ENCODE measurements at regions of chr3 and their contacts with region 1.

Region 1: DNA sequence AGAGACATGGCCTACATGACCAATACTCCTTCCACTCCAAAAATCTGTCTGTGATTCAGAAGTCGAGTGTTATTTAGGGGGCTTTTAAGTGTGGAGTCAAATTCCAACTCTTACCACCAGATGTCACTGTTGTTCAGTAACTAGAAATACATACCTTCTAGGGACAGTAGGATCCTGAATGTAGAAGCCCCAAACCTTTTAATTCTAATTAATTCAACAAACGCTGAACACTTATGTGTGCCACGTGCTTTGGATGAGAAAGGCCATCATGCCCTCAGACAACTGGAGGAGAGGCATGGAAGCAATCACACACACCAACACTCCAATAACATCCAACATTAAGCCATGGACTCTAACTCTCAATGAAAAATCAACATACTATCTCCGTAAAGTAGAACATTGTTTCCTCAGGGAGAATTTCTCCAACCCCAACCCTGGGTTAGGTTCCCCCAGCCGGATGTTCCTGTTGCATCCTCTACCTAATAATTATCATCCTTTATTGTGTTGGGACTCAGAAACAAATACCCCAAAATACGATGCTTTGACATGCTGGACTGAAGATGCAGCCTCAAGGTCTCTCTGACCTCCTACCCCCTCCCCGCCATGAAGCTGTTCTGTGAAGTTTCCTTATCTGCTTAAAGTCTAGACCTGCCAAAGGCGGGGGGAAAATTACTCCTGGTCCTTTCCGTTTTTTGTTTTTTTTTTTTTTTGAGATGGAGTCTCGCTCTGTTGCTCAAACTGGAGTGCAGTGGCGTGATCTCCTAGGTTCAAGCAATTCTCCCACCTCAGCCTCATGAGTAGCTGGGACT is 8.0 kb upstream of the CCDC13 start:
- DNase-seq: peak; percentile 61 to 81 (median 70)
- ATAC-seq: peak; percentile 95
- H3K4me3 ChIP-seq: no peak overlapping the region
- H3K27ac ChIP-seq: no peak overlapping the region
- H3K4me1 ChIP-seq: peaks cover 4 to 6% of the 10 kb centered on the region in 2 experiments; a peak in 2 of 5 replicates
- H3K27me3 ChIP-seq: no peaks in the 10 kb centered on the region
- CTCF ChIP-seq: peak; percentile 77 to 92 (median 77); a peak in 5 of 6 replicates
- EP300 ChIP-seq: no peak
- POLR2A ChIP-seq: no peak
- RAD21 ChIP-seq: peak; percentile 91 to 93

Region 2: GRCh38 chr3:42819351-42819965 is 38.4 kb after region 1 on chr3:
- CTCF ChIA-PET with region 1: interaction called, 5 read pairs
- POLR2A ChIA-PET with region 1: interaction called, 4 read pairs
- in situ Hi-C with region 1: no loop called
- intact Hi-C with region 1: loop called (anchors 2 kb)
- DNase-seq: peak in 2 of 4 experiments; percentile 43 to 54
- ATAC-seq: peak; percentile 81
- H3K4me3 ChIP-seq: no peak overlapping the region
- H3K27ac ChIP-seq: no peak overlapping the region
- H3K4me1 ChIP-seq: peaks cover 3 to 11% of the 10 kb centered on the region in 2 experiments; a peak in 3 of 5 replicates
- H3K27me3 ChIP-seq: 0 out of 5 replicates have a peak, but pooled peaks cover 0 to 4% of the 10 kb centered on the region in 2 experiments
- CTCF ChIP-seq: peak; percentile 41 to 45 (median 43); a peak in 4 of 6 replicates
- EP300 ChIP-seq: no peak
- POLR2A ChIP-seq: no peak
- RAD21 ChIP-seq: peak in 1 of 2 experiments; percentile 14; a peak in 1 of 4 replicates

Region 3: DNA sequence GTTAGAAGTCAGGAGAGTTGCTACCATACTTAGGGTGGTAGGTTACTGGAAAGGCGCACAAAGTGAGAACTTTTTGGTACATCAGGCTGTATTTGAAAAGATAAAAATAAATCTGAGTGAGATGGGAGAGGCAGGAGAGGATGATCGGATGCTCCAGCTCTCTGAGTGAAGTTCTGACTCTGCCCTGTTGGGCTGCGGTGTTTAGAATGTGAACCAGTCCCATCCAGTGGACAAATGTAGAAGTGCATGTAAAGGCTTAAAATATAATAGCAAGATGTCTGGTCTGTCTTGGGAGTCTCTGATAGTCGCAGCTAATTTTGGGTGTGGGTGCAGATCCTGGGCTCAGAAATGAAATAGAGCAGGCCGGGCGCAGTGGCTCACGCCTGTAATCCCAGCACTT is 58.5 kb after region 1 on chr3:
- CTCF ChIA-PET with region 1: interaction called, 16 read pairs
- POLR2A ChIA-PET with region 1: no interaction called
- in situ Hi-C with region 1: no loop called
- intact Hi-C with region 1: loop called (anchors 2 kb)
- DNase-seq: peak; percentile 69 to 86 (median 75)
- ATAC-seq: peak; percentile 92
- H3K4me3 ChIP-seq: no peak overlapping the region
- H3K27ac ChIP-seq: no peak overlapping the region
- H3K4me1 ChIP-seq: peaks cover 10 to 26% of the 10 kb centered on the region in 2 experiments
- H3K27me3 ChIP-seq: peaks cover 0 to under 1% of the 10 kb centered on the region in 2 experiments; a peak in 2 of 5 replicates
- CTCF ChIP-seq: peak; percentile 75 to 98 (median 94)
- EP300 ChIP-seq: no peak
- POLR2A ChIP-seq: no peak
- RAD21 ChIP-seq: peak; percentile 77 to 83

Region 4: DNA sequence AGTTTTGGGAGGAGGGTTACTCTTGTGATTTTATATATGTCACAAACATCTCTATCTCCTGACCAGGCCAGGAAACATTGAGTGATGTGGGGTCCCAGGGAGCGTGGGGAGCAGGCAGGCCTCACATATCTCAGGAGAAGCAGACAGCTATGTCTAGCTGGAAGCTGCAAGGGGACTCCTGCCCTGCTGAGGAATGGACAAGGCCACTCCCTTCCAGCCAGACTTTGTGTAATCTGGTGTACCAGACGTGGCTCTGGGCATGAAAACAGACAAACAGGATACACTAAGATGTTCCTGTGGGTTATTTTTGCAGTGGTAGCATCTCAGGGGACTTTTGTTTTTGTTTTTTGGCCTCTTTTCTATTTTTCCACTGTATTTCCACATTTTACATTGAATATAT is 71.3 kb after region 1 on chr3:
- CTCF ChIA-PET with region 1: no interaction called
- POLR2A ChIA-PET with region 1: no interaction called
- in situ Hi-C with region 1: no loop called
- intact Hi-C with region 1: no loop called
- DNase-seq: peak in 2 of 4 experiments; percentile 70 to 73
- ATAC-seq: peak; percentile 72
- H3K4me3 ChIP-seq: no peak overlapping the region
- H3K27ac ChIP-seq: no peak overlapping the region
- H3K4me1 ChIP-seq: peaks cover 7 to 30% of the 10 kb centered on the region in 2 experiments; a peak in 3 of 5 replicates
- H3K27me3 ChIP-seq: peaks cover 4 to 44% of the 10 kb centered on the region in 2 experiments; a peak in 2 of 5 replicates
- CTCF ChIP-seq: no peak
- EP300 ChIP-seq: peak; percentile 47; the same call in 1 of the 2 replicates
- POLR2A ChIP-seq: no peak
- RAD21 ChIP-seq: no peak

Region 5: GRCh38 chr3:42880601-42881451 is 99.7 kb after region 1 on chr3:
- CTCF ChIA-PET with region 1: interaction called, 27 read pairs
- POLR2A ChIA-PET with region 1: interaction called, 3 read pairs
- in situ Hi-C with region 1: loop called (anchors 5 kb)
- intact Hi-C with region 1: loop called (anchors 1 kb)
- DNase-seq: peak; percentile 94 to 97 (median 95)
- ATAC-seq: peak; percentile 100
- H3K4me3 ChIP-seq: peak overlapping the region; percentile 42
- H3K27ac ChIP-seq: no peak overlapping the region
- H3K4me1 ChIP-seq: peaks cover 0 to 12% of the 10 kb centered on the region in 2 experiments; a peak in 3 of 5 replicates
- H3K27me3 ChIP-seq: peaks cover 3 to 15% of the 10 kb centered on the region in 2 experiments; a peak in 3 of 5 replicates
- CTCF ChIP-seq: peak; percentile 96 to 98 (median 96)
- EP300 ChIP-seq: no peak; the same call in 1 of the 2 replicates
- POLR2A ChIP-seq: peak; percentile 40
- RAD21 ChIP-seq: peak; percentile 99 to 100